ENCODE measurements at regions of chrX and their contacts with region 1.

Region 1: GRCh38 chrX:155035688-155036087 is 9.0 kb downstream of the FUNDC2 start:
- H3K4me3 ChIP-seq: no peak overlapping the region
- H3K27ac ChIP-seq: no peak overlapping the region
- H3K4me1 ChIP-seq: no peaks in the 10 kb centered on the region
- CTCF ChIP-seq: no peak

Region 2: DNA sequence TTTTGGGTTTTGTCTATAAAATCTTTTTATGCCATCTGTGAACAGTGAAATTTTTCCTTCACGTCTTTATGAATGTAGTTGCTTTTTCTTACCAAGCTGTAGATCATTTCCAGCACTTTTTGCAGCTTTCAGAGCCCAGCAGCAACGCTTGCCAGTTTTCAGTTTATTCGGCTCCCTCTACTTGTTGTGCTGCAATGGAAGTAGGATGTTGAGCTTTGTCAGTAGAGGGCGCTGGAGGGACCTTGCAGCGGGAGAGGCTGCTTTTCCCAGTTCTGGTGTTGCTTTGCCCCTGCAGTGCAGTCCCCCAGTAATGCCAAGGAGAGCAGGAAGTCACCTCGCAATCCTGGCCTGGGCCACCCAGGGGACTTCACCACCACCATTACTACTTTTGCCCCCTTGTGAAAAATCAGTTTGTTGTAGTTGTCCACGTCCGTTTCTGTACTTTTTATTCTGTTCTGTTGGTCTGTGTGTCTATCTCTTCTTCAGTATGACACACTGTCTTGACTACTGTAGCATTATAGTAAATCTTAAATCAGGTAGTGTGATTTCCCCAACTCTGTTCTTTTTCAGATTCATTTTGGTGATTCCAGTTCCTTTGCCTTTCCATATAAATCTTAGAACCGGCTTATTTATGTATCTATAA is 13.4 kb after region 1 on chrX:
- CTCF ChIA-PET with region 1: interaction called, 12 read pairs
- POLR2A ChIA-PET with region 1: no interaction called
- H3K4me3 ChIP-seq: no peak overlapping the region
- H3K27ac ChIP-seq: no peak overlapping the region
- H3K4me1 ChIP-seq: no peaks in the 10 kb centered on the region
- CTCF ChIP-seq: peak; percentile 54

Measured in HEK293 (cell line).